Panc1 (cell line): ENCODE measurements at regions of chr2 and their contacts with region 1.

Region 1: DNA sequence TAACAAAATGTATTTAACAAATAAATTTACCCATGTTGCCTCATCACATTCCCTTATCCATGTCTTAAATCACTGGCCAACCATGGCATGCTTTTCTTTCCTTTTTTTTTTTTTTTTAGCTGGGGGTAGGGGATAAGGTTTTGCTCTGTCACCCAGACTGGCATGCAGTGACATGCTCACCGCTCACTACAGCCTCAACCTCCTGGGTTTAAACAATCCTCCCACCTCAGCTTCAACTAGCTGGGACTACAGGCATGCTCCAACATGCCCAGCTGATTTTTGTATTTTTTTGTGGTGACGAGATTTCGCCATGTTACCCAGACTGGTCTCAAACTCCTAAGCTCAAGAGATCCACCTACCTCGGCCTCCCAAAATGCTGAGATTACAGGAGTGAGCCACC is 266.4 kb downstream of the THSD7B start:
- DNase-seq: no peak
- ATAC-seq: no peak
- H3K4me3 ChIP-seq: no peak overlapping the region
- H3K27ac ChIP-seq: no peak overlapping the region
- H3K4me1 ChIP-seq: no peaks in the 10 kb centered on the region
- H3K27me3 ChIP-seq: no peaks in the 10 kb centered on the region
- CTCF ChIP-seq: no peak

Region 2: DNA sequence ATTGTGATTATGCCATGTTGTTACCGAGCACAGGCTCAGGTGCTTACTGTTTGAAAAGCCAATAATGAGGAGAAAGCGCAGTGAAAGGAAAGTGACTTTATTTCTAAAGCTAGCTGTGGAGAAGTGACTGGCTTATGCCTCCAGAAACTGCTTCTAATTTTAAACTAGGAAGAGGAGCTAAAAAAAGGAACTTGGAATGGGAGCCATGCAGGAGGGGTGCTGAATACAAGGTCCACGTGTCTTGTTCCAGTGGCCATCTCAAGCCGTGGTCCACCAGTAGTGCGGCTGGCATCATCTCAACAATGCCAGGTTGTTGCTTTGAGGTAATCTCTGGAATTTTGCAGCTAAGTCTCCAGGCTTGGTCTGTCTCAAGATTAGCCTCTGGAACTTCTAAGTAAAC is 15.6 kb after region 1 on chr2:
- CTCF ChIA-PET with region 1: no interaction called
- POLR2A ChIA-PET with region 1: interaction called, 10 read pairs
- in situ Hi-C with region 1: no loop called
- intact Hi-C with region 1: no loop called
- DNase-seq: no peak
- ATAC-seq: no peak
- H3K4me3 ChIP-seq: no peak overlapping the region
- H3K27ac ChIP-seq: no peak overlapping the region
- H3K4me1 ChIP-seq: no peaks in the 10 kb centered on the region
- H3K27me3 ChIP-seq: no peaks in the 10 kb centered on the region
- CTCF ChIP-seq: no peak

Region 3: DNA sequence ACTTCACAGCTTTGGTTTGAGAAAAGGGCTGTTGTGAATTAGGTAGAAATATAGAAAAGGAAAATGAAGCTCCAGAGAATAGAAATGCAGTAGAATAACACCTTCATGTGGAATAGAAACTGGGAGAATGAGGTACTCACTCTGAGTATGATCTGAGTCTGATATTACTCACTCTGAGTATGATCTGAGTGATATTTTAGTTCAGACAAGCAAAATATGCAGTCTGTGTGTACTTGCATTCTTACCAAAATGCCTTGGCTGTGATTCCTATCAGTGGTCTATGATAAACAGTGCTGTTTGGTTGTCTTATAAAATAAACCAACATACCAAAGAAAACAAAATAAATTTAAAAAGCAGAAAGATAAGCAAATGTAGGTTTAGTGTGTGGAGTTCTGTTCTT is 221.2 kb after region 1 on chr2:
- CTCF ChIA-PET with region 1: no interaction called
- POLR2A ChIA-PET with region 1: no interaction called
- in situ Hi-C with region 1: no loop called
- intact Hi-C with region 1: no loop called
- DNase-seq: no peak
- ATAC-seq: no peak
- H3K4me3 ChIP-seq: no peak overlapping the region
- H3K27ac ChIP-seq: no peak overlapping the region
- H3K4me1 ChIP-seq: no peaks in the 10 kb centered on the region
- H3K27me3 ChIP-seq: no peaks in the 10 kb centered on the region
- CTCF ChIP-seq: no peak